ENCODE measurements at regions of chr12 and their contacts with region 1.

Region 1: DNA sequence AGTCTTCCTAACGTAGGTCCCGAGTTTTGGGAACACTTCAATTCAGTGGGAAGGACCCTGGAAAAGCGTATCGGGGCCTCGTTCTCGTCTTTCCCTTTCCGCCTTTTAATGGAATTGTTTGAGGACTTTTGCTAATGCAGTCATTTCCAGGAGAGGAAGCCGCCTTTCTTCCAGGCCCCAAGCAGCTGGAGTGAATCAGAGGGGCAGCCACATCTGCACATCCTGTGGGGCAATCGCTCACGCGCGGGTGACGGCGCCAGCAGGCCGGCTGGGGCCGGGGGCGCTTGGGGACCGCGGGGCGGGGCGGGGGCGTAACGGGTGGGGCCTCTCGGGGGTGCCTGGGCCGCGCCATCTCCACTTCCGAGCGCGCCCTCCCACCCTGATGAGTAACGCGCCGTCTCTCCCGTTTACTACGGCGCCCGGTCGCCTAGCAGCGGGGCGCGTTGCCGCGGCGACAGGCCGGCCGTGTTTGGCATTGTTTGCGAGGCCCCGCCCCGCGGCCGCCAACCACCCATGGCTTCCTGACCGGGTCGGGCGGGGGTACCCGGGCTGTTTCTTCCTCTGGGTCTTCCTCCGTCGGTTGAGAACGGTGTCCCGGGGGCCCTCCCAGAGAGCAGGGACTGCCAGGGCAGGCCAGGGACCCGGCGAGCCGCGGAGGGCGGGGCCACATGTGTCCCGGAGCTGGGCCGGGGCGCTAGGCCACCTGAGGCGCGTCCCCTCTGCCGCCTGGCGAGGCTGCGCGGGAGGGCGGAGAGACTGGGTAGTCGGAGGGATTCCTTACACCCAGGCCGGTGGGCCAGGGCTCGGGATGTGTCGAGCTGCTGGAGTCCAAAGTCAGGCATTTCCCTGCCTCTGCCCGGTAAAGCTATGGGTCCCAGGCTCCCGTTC is 2.3 kb downstream of the GSG1 start:
- DNase-seq: peak; percentile 96 to 97
- ATAC-seq: peak; percentile 86 to 96 (median 91)
- H3K4me3 ChIP-seq: peak overlapping the region; percentile 50
- H3K4me3 Mint-ChIP-seq: peak overlapping the region; percentile 90
- H3K27ac ChIP-seq: peak overlapping the region; percentile 90
- H3K27ac Mint-ChIP-seq: peak overlapping the region; percentile 82 to 97
- H3K4me1 ChIP-seq: peaks cover 32% of the 10 kb centered on the region
- H3K4me1 Mint-ChIP-seq: peaks cover 40 to 45% of the 10 kb centered on the region in 2 donors
- H3K27me3 ChIP-seq: no peaks in the 10 kb centered on the region
- H3K27me3 Mint-ChIP-seq: peaks cover 0 to 5% of the 10 kb centered on the region in 2 donors
- CTCF ChIP-seq: no peak

Region 2: GRCh38 chr12:12916135-12916944 is 184.8 kb before region 1 on chr12:
- intact Hi-C with region 1: loop called (anchors 1 kb)
- DNase-seq: peak; percentile 76 to 90
- ATAC-seq: peak; percentile 95 to 100 (median 99)
- H3K4me3 ChIP-seq: no peak overlapping the region
- H3K4me3 Mint-ChIP-seq: peak overlapping the region; percentile 3
- H3K27ac ChIP-seq: no peak overlapping the region
- H3K27ac Mint-ChIP-seq: no peak overlapping the region
- H3K4me1 ChIP-seq: peaks cover 5% of the 10 kb centered on the region
- H3K4me1 Mint-ChIP-seq: peaks cover 7 to 10% of the 10 kb centered on the region in 2 donors
- H3K27me3 ChIP-seq: no peaks in the 10 kb centered on the region
- H3K27me3 Mint-ChIP-seq: peaks cover 15 to 26% of the 10 kb centered on the region in 2 donors
- CTCF ChIP-seq: peak; percentile 95

Region 3: DNA sequence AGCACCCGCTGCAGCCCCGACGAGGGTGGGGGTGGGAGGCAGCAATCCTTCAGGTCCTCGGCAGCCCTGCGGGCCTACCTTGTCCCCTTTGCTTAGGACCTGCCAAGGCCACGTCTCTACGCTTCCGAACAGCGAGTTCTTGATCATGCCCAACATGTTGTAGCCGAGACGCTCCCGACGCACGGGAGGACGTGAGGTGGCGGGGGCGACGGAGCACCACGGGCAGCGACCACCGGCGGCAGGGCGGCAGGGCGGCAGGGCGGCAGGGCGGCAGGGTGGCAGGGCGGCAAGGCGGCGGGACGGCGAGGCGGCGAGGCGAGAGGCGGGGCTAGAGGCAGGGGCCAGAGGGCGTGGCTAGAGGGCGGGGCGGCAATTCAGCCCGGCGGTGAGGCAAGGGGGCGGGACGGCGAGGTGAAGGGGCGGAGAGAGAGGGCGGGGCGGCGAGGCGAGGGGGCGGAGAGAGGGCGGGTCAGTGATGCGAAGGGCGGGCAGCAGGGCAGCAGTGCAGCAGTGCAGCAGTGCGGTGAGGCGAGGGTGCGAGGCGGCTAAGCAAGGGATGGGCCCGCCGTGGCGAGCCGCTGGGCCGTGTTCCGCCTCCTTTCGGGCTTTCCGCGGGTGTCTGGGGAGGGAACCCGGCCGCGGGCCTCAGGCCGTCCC is 101.0 kb before region 1 on chr12 and contains the start of gene HEBP1:
- intact Hi-C with region 1: loop called (anchors 1 kb)
- DNase-seq: peak; percentile 96
- ATAC-seq: peak; percentile 89 to 99 (median 92)
- H3K4me3 ChIP-seq: peak within 1 kb of the TSS; percentile 78
- H3K4me3 Mint-ChIP-seq: peak within 1 kb of the TSS; percentile 92
- H3K27ac ChIP-seq: peak within 1 kb of the TSS; percentile 76
- H3K27ac Mint-ChIP-seq: peak within 1 kb of the TSS; percentile 78 to 89
- H3K4me1 ChIP-seq: peaks cover 25% of the 10 kb centered on the region
- H3K4me1 Mint-ChIP-seq: peaks cover 24 to 46% of the 10 kb centered on the region in 2 donors
- H3K27me3 ChIP-seq: peaks cover 2% of the 10 kb centered on the region
- H3K27me3 Mint-ChIP-seq: peaks cover 0 to 4% of the 10 kb centered on the region in 2 donors
- CTCF ChIP-seq: no peak
- total RNA-seq, gene HEBP1: 10.8 to 13.5 (median 11.9) TPM

Region 4: DNA sequence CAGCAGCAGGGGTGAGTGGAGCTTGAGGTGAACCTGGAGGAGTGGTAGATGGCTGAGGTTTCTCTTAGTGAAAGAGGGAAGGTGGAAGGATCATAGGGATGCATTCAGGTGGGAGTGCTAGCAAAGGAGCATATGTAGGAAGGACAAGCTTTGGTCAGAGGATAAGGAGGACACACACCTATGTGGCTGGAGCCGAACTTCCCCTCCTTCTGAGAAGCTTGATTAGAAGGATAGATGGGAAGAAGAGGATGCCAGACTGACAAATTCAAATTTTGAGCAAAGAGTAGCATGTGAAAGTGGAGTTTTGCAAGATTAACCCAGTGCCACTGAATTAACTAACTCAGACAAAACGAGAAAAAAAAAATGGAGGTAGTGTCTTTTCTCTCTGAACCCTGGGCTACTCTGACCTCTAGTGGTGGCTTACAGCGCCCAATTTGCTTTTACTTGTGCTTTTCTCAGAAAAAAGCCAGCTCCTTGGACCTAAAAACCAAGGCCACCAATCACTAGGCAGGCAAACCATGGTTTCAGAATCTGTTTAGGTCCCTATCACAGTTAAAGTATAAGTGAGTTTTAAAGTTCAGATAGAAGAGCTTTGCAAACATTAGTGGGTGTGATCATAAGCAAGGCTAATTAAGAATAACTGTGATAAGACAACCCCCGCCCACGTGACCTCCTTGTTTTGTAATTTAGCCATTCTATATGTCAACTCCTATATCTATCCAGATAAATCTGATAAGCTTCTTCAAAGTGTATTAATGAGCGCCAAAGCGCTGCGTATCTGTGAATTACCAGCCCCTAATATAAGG is 110.9 kb after region 1 on chr12:
- intact Hi-C with region 1: loop called (anchors 1 kb)
- DNase-seq: peak; percentile 52 to 88
- ATAC-seq: peak; percentile 72 to 93 (median 80)
- H3K4me3 ChIP-seq: no peak overlapping the region
- H3K4me3 Mint-ChIP-seq: no peak overlapping the region
- H3K27ac ChIP-seq: no peak overlapping the region
- H3K27ac Mint-ChIP-seq: peak overlapping the region in 1 of 2 donors; percentile 6
- H3K4me1 ChIP-seq: peaks cover 3% of the 10 kb centered on the region
- H3K4me1 Mint-ChIP-seq: peaks cover 0 to 7% of the 10 kb centered on the region in 2 donors
- H3K27me3 ChIP-seq: no peaks in the 10 kb centered on the region
- H3K27me3 Mint-ChIP-seq: peaks cover 7 to 9% of the 10 kb centered on the region in 2 donors
- CTCF ChIP-seq: peak; percentile 82

Region 5: GRCh38 chr12:14167005-14167628 is 1066.0 kb after region 1 on chr12:
- intact Hi-C with region 1: loop called (anchors 5 kb)
- DNase-seq: peak in 1 of 2 donors; percentile 63
- ATAC-seq: peak; percentile 46 to 69 (median 67)
- H3K4me3 ChIP-seq: no peak overlapping the region
- H3K4me3 Mint-ChIP-seq: no peak overlapping the region
- H3K27ac ChIP-seq: no peak overlapping the region
- H3K27ac Mint-ChIP-seq: no peak overlapping the region
- H3K4me1 ChIP-seq: no peaks in the 10 kb centered on the region
- H3K4me1 Mint-ChIP-seq: peaks cover 0 to 5% of the 10 kb centered on the region in 2 donors
- H3K27me3 ChIP-seq: no peaks in the 10 kb centered on the region
- H3K27me3 Mint-ChIP-seq: peaks cover 0 to 5% of the 10 kb centered on the region in 2 donors
- CTCF ChIP-seq: peak; percentile 97

Measured in natural killer cell (primary cell).